ENCODE measurements at regions of chr15 and their contacts with region 1.

Region 1: GRCh38 chr15:93420050-93420452 is 331.0 kb upstream of the RGMA start:
- DNase-seq: no peak
- H3K4me3 ChIP-seq: no peak overlapping the region
- H3K27ac ChIP-seq: no peak overlapping the region
- H3K4me1 ChIP-seq: no peaks in the 10 kb centered on the region
- H3K27me3 ChIP-seq: no peaks in the 10 kb centered on the region
- CTCF ChIP-seq: no peak
- EP300 ChIP-seq: no peak
- POLR2A ChIP-seq: no peak

Region 2: GRCh38 chr15:93372221-93372869 is 47.7 kb before region 1 on chr15:
- intact Hi-C with region 1: loop called in 1 of 4 experiments (anchors 2 kb)
- DNase-seq: no peak
- H3K4me3 ChIP-seq: no peak overlapping the region
- H3K27ac ChIP-seq: no peak overlapping the region
- H3K4me1 ChIP-seq: no peaks in the 10 kb centered on the region
- H3K27me3 ChIP-seq: no peaks in the 10 kb centered on the region
- CTCF ChIP-seq: no peak
- EP300 ChIP-seq: no peak
- POLR2A ChIP-seq: no peak